ENCODE measurements at regions of chr5 and their contacts with region 1.

Region 1: GRCh38 chr5:169302491-169303118 is 1.7 kb upstream of the SLIT3 start:
- DNase-seq: no peak
- H3K4me3 ChIP-seq: no peak overlapping the region
- H3K27ac ChIP-seq: peak overlapping the region in 2 of 4 donors; percentile 84 to 89
- H3K4me1 ChIP-seq: peaks cover 8 to 50% (median 42%) of the 10 kb centered on the region in 4 donors
- H3K27me3 ChIP-seq: peaks cover 0 to 19% (median 0%) of the 10 kb centered on the region in 4 donors
- CTCF ChIP-seq: peak; percentile 88 to 95 (median 91)
- EP300 ChIP-seq: no peak
- POLR2A ChIP-seq: no peak

Region 2: DNA sequence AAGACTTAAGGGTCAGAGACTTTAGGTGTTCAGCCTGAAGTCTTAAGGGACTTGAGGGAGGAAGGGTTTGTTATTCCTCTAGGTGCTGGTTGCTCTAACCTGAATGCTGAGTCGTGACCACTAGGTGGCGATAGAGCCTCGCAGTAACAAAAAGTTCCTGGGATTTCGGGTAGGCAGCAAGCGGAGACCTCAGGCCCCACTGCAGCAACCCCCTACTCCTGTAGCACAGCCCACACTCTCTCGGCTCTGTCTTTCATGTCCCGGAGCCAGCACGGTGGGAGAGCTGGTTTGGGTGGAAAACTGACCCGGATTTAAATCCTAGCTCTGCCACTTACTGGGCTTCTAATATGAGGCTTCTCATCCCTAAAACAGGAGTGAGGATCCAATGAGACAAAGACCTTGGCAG is 623.1 kb before region 1 on chr5:
- intact Hi-C with region 1: loop called (anchors 5 kb)
- DNase-seq: no peak
- H3K4me3 ChIP-seq: no peak overlapping the region
- H3K27ac ChIP-seq: no peak overlapping the region
- H3K4me1 ChIP-seq: peaks cover 13 to 35% (median 17%) of the 10 kb centered on the region in 4 donors
- H3K27me3 ChIP-seq: no peaks in the 10 kb centered on the region
- CTCF ChIP-seq: peak; percentile 74 to 93 (median 84)
- EP300 ChIP-seq: no peak
- POLR2A ChIP-seq: no peak

Region 3: DNA sequence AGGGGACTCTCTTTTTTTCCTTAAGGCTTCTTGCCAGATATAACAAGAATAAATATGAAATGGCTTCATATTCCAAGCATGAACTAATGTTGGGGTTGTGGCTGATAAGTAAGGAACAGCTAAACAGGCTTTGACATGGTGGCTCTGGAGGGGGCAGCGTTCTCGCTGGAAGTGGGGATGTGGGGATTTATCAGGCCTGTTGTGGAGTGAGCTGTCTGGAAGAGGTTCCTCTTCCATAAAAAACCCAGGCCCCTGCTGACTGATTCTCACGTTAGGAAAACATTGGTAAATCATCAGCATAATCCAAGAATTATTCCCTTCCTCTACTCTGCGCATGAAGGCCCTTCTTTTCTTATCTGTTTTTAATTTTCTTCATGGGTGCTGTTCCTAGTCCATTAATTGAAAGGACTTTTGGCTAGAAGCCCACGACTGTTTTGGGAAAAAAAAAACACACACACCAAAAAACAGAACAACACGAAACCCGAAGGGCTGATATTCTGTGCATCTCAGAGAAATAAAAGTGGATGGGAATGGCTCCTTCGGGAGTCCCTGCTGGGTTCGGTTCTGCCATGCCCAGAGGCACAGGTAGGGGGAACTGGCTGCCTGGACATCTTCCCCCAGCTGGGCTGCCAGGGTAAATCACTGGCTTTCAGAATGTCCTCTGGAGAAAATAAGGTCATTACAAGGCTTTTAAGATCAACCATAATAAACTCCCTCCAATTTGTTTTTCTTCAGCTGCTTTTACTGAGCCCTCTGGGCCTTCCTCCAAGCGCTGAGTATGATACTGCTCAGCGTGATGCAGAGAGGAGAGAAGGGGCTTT is 298.7 kb before region 1 on chr5:
- intact Hi-C with region 1: loop called (anchors 5 kb)
- DNase-seq: no peak
- H3K4me3 ChIP-seq: no peak overlapping the region
- H3K27ac ChIP-seq: peak overlapping the region in 3 of 4 donors; percentile 32 to 51 (median 41)
- H3K4me1 ChIP-seq: peaks cover 5 to 44% (median 36%) of the 10 kb centered on the region in 4 donors
- H3K27me3 ChIP-seq: no peaks in the 10 kb centered on the region
- CTCF ChIP-seq: peak; percentile 48 to 57 (median 56)
- EP300 ChIP-seq: no peak
- POLR2A ChIP-seq: no peak

Region 4: GRCh38 chr5:169521366-169521983 is 218.9 kb after region 1 on chr5:
- intact Hi-C with region 1: no loop called
- DNase-seq: no peak
- H3K4me3 ChIP-seq: no peak overlapping the region
- H3K27ac ChIP-seq: no peak overlapping the region
- H3K4me1 ChIP-seq: peaks cover 0 to 6% (median 2%) of the 10 kb centered on the region in 4 donors
- H3K27me3 ChIP-seq: no peaks in the 10 kb centered on the region
- CTCF ChIP-seq: no peak
- EP300 ChIP-seq: no peak
- POLR2A ChIP-seq: no peak

Measured in esophagus muscularis mucosa (tissue), 4 donors.